ENCODE measurements at regions of chr19 and their contacts with region 1.

Region 1: DNA sequence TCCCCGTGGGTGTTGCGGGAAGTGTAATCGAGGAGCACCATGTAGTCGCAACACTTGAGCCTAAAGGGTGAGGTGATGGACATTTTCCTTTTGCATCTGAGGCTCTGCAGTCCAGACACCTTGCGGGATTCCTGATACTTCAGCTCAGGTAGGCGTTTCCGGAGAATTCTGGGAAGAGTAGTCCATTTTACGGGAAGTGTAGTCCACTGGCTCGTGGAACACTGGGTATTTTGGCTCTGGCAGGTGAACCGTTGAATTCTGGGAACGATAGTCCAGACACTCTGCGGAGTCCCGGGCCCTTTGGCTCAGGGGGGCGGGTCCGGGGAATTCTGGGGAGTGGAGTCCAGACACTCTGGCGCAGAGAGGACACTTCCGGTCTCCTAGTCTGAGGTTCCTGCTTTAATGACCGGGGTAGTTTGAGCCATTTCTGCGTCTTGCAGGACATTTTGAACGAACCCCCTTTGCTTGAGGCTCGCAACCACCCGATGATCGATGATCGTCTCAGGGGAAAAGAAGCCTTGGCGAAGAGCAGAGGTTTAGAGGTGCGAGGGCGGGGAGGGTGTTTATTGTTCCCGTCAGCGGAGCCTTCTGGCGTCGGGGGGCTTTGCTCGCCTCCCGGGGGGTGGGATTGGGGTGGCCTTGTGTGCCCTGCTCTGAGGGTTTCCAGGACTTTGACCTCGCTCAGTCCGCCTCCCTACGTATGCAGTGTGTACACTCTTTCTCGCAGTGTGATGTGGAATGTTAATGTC is at the start of gene ZNF223:
- DNase-seq: peak; percentile 94 to 97 (median 97)
- ATAC-seq: peak; percentile 100
- H3K4me3 ChIP-seq: peak within 1 kb of the TSS; percentile 64 to 85 (median 74)
- H3K27ac ChIP-seq: peak within 1 kb of the TSS; percentile 27 to 79 (median 66)
- H3K4me1 ChIP-seq: peaks cover 0 to 21% (median 13%) of the 10 kb centered on the region in 12 donors
- H3K27me3 ChIP-seq: peaks cover 0 to 27% (median 5%) of the 10 kb centered on the region in 9 donors
- CTCF ChIP-seq: no peak
- POLR2A ChIP-seq: no peak
- total RNA-seq, gene ZNF223: 1.7 to 5.1 (median 3.2) TPM

Region 2: DNA sequence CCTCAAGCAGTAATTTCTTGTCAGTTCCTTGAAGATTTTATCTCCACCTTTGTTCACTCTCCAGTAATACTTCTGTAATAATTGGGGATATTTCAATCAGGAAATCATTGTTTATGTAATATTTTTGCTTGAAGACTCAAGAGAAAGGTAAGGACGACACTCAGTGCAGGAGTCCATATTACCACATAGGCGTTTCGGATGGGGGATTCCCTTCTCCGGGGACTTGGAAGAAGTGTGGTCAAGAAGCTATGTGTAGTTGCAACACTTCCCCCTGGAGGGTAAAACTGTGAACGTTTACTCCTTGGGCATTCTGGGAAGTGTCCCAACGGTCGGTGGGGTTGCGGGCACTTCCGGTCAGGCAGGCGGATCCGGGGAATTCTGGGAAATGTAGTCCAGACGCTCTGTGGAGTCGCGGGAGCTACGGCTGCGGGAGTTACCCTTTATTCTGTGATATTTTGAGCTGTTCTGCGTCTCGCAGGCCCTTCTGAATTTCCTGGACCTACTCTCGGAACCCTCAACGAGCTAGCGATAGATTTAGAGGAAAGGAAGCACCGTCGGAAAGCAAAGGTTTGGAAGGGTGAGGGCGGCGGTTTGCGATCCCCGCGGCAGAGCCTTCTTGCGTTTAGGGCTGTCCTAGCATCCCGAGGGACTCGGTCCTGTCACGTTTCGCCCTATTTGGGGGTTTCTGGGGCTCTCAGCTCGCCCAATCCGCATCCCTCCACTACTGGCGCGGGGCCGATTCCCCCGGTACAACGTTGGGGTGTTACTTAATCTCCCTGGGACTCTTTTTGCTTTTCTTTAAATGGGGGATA is 100.8 kb before region 1 on chr19 and contains the start of gene ZNF221:
- intact Hi-C with region 1: loop called in 1 of 10 experiments (anchors 2 kb)
- DNase-seq: peak; percentile 91 to 95 (median 93)
- ATAC-seq: peak; percentile 98 to 100 (median 100)
- H3K4me3 ChIP-seq: peak within 1 kb of the TSS; percentile 57 to 95 (median 78)
- H3K27ac ChIP-seq: peak within 1 kb of the TSS; percentile 18 to 85 (median 75)
- H3K4me1 ChIP-seq: peaks cover 0 to 5% (median 0%) of the 10 kb centered on the region in 12 donors
- H3K27me3 ChIP-seq: no peaks in the 10 kb centered on the region
- CTCF ChIP-seq: peak; percentile 19 to 75 (median 44)
- POLR2A ChIP-seq: no peak
- total RNA-seq, gene ZNF221: 2.6 to 6.7 (median 3.9) TPM

Region 3: DNA sequence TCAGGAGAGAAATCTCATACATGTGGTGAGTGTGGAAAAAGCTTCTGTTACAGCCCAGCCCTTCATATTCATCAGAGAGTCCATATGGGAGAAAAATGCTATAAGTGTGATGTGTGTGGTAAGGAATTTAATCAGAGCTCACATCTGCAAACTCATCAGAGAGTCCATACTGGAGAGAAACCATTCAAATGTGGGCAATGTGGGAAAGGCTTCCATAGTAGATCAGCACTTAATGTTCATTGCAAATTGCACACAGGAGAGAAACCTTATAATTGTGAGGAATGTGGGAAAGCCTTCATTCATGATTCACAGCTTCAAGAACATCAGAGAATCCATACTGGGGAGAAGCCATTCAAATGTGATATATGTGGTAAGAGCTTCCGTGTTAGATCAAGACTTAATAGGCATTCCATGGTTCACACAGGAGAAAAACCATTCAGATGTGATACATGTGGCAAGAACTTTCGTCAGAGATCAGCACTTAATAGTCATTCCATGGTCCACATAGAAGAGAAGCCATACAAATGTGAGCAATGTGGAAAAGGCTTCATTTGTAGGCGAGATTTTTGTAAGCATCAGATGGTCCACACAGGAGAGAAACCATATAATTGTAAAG is 85.6 kb before region 1 on chr19:
- intact Hi-C with region 1: no loop called
- DNase-seq: no peak
- ATAC-seq: no peak
- H3K4me3 ChIP-seq: no peak overlapping the region
- H3K27ac ChIP-seq: no peak overlapping the region
- H3K4me1 ChIP-seq: no peaks in the 10 kb centered on the region
- H3K27me3 ChIP-seq: no peaks in the 10 kb centered on the region
- CTCF ChIP-seq: no peak
- POLR2A ChIP-seq: no peak

Region 4: GRCh38 chr19:43983912-43984686 is 67.7 kb before region 1 on chr19 and contains the start of gene ZNF155:
- intact Hi-C with region 1: loop called in 1 of 10 experiments (anchors 2 kb)
- DNase-seq: peak; percentile 92 to 97 (median 96)
- ATAC-seq: peak; percentile 99 to 100 (median 100)
- H3K4me3 ChIP-seq: peak within 1 kb of the TSS; percentile 51 to 89 (median 72)
- H3K27ac ChIP-seq: peak within 1 kb of the TSS in 11 of 12 donors; percentile 63 to 91 (median 76)
- H3K4me1 ChIP-seq: peaks cover 0 to 15% (median 7%) of the 10 kb centered on the region in 12 donors
- H3K27me3 ChIP-seq: no peaks in the 10 kb centered on the region
- CTCF ChIP-seq: no peak
- POLR2A ChIP-seq: no peak
- total RNA-seq, gene ZNF155: 4.0 to 7.7 (median 6.6) TPM

Region 5: GRCh38 chr19:44021221-44021620 is 30.6 kb before region 1 on chr19:
- intact Hi-C with region 1: no loop called
- DNase-seq: no peak
- ATAC-seq: no peak
- H3K4me3 ChIP-seq: no peak overlapping the region
- H3K27ac ChIP-seq: no peak overlapping the region
- H3K4me1 ChIP-seq: peaks cover 0 to 9% (median 4%) of the 10 kb centered on the region in 12 donors
- H3K27me3 ChIP-seq: peaks cover 0 to 3% (median 0%) of the 10 kb centered on the region in 9 donors
- CTCF ChIP-seq: no peak
- POLR2A ChIP-seq: no peak

Region 6: GRCh38 chr19:44093931-44094765 is 42.3 kb after region 1 on chr19 and contains the start of gene ZNF224:
- intact Hi-C with region 1: loop called in 2 of 10 experiments (anchors 1 to 2 kb)
- DNase-seq: peak; percentile 93 to 95 (median 94)
- ATAC-seq: peak; percentile 95 to 99 (median 99)
- H3K4me3 ChIP-seq: peak within 1 kb of the TSS; percentile 67 to 89 (median 77)
- H3K27ac ChIP-seq: peak within 1 kb of the TSS in 11 of 12 donors; percentile 51 to 86 (median 76)
- H3K4me1 ChIP-seq: peaks cover 0 to 24% (median 11%) of the 10 kb centered on the region in 12 donors
- H3K27me3 ChIP-seq: no peaks in the 10 kb centered on the region
- CTCF ChIP-seq: no peak
- POLR2A ChIP-seq: peak in 1 of 2 donors; percentile 62
- total RNA-seq, gene ZNF224: 9.9 to 17.7 (median 13.0) TPM

Region 7: DNA sequence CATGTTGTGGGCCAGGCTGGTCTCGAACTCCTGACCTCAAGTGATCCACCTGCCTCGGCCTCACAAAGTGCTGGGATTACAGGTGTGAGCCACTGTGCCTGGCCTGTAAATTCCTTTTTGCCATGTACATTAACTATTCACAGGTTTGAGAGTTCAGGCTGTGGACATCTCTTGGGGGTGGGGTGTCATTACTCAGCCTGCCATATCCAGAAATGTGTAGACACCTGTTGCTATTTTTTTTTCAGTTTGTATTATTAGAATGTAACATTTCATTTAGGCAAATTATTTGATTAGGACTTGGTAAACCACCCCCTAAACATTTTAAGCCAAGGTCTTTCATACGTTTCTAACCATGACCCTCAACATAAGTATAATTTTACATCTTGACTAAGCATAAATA is 181.0 kb after region 1 on chr19:
- intact Hi-C with region 1: no loop called
- DNase-seq: no peak
- ATAC-seq: no peak
- H3K4me3 ChIP-seq: no peak overlapping the region
- H3K27ac ChIP-seq: no peak overlapping the region
- H3K4me1 ChIP-seq: no peaks in the 10 kb centered on the region
- H3K27me3 ChIP-seq: no peaks in the 10 kb centered on the region
- CTCF ChIP-seq: no peak
- POLR2A ChIP-seq: no peak

Region 8: DNA sequence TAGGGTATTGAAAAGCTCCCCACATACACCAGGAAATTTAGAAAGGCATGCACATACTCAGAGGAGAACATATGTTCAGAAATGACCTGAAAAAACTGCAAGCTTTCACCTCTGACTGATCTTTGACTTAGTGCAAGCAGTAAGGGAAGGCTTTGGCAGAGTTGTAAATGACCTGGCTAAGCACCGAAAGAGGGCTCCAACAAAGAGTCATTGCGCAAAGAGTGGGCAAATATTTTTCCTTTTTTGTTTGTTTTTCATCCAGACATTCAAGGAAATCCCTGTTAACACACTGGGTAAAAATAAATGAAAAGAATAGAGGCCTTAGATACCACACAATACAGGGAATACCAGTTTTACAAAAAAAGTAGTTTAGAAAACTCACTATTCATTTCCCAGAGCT is 202.7 kb after region 1 on chr19:
- intact Hi-C with region 1: no loop called
- DNase-seq: no peak
- ATAC-seq: no peak
- H3K4me3 ChIP-seq: no peak overlapping the region
- H3K27ac ChIP-seq: no peak overlapping the region
- H3K4me1 ChIP-seq: no peaks in the 10 kb centered on the region
- H3K27me3 ChIP-seq: no peaks in the 10 kb centered on the region
- CTCF ChIP-seq: no peak
- POLR2A ChIP-seq: no peak